GM12878 (cell line): ENCODE measurements at regions of chr11 and their contacts with region 1.

Region 1: DNA sequence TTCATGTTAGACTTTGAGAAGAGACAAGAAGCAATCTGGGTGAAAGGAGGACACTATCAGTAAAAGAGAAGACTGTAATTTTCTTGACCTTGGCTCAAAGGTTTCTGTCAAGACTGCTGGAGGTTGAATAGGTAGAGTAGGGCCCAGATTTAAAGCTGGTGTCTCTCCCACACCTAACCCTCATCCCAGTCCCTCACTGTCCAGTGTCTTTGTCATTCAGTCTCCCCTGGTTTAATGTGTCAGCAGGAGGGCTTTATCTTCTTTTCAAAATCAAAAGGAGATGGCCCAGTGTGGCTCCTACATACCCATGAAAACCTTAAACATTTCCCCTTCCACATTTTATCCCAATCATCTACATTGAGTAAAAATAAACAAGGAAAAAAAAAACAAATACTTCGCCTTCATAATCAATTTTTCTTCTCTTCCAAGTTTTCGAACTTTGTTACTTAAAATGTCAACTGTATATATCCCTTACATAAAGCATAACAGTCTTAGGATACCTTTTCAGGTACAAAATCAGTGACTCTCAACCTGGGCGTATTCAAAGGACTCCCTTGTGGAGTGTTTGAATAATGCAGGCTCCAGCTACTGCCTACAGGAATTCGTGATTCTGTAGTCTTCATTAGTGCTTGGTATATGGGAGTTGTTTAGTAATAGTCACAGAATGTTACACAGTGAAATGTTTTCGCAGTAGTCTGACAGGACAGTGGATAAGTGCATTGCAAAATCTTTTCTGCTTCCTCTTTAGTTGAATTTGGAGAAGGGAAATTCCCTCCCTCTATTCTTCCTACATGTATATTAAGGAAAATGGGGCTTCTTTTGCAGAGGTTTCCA is 87.2 kb downstream of the FAT3 start:
- DNase-seq: no peak
- ATAC-seq: no peak; the same call in 2 of the 3 replicates
- H3K4me3 ChIP-seq: no peak overlapping the region
- H3K27ac ChIP-seq: no peak overlapping the region
- H3K4me1 ChIP-seq: no peaks in the 10 kb centered on the region
- H3K27me3 ChIP-seq: no peaks in the 10 kb centered on the region; a peak in 1 of 4 replicates
- CTCF ChIP-seq: no peak
- EP300 ChIP-seq: no peak
- POLR2A ChIP-seq: no peak
- RAD21 ChIP-seq: no peak

Region 2: DNA sequence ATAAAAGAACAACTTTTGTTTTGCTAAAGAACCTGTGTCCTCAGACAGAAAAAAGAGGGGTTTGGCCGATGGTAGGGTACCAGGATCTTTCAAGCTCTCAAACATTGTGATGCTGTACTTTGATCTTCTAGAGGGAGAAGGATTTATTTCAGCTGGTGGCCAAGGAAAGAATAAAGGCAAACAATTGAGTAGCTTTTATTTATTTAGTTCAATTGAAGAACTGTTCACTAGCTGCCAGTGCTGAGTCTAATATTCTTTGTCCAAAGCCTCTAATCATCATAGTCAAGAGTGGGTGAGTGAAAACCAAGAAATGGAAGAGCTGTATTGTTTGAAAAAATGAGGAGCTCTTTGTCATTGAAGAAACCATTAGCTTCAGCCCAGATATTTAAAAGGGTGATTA is 51.2 kb after region 1 on chr11:
- CTCF ChIA-PET with region 1: no interaction called
- POLR2A ChIA-PET with region 1: no interaction called
- RAD21 ChIA-PET with region 1: no interaction called
- SMC1A ChIA-PET with region 1: no interaction called
- in situ Hi-C with region 1: no loop called
- intact Hi-C with region 1: loop called (anchors 5 kb)
- DNase-seq: no peak
- ATAC-seq: no peak
- H3K4me3 ChIP-seq: no peak overlapping the region
- H3K27ac ChIP-seq: no peak overlapping the region
- H3K4me1 ChIP-seq: no peaks in the 10 kb centered on the region
- H3K27me3 ChIP-seq: no peaks in the 10 kb centered on the region
- CTCF ChIP-seq: no peak
- EP300 ChIP-seq: no peak
- POLR2A ChIP-seq: no peak
- RAD21 ChIP-seq: no peak